Cardiac septum (tissue), 1 donor: ENCODE measurements at regions of chr2 and their contacts with region 1.

Region 1: GRCh38 chr2:96951093-96951654 is 35.2 kb downstream of the FAM178B start:
- DNase-seq: peak; percentile 88

Region 2: GRCh38 chr2:96608469-96609455 is 342.4 kb before region 1 on chr2:
- intact Hi-C with region 1: no loop called
- DNase-seq: no peak

Region 3: DNA sequence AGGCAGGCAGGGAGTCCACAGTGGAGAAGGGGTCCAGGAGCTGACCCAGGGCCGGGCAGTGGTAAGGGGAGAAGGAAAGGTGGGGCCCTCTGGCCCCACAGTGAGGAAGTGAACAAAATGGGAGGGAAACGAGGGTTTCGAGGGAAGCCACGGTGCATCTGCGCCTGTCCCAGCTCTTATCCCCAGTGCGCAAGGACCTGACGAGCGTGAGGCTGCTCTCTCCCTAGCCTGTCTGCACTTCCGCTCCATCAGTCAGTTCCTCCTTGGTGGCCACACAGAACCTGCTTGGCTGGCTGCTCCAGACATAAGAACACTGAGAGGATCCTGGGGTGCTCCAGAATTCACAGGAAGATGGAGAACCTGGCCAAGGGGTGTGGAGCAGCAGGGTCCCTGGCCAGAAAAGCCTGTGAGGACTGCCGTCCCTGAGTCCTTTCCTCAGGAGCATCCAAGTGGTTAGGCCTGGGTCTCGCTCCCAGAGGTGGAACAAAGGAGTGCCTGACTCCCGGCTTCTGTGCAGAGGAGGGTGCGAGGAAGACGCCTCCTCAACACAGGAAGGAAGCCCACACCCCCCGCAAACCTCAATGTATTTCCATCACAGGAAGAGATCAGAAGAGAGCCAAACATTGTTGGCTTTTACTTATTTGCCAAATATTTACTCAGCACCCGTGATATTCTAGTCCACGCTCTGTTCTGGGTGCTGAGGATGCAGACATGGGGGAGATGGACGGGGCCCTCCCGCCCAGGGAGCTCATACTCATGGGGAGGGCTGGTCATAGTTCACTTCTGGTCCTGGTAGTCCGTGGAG is 37.6 kb before region 1 on chr2:
- intact Hi-C with region 1: loop called (anchors 5 kb)
- DNase-seq: no peak